ENCODE measurements at regions of chr7 and their contacts with region 1.

Region 1: GRCh38 chr7:44490351-44491200 is at the start of gene NUDCD3:
- DNase-seq: peak; percentile 85 to 94
- H3K4me3 ChIP-seq: peak within 1 kb of the TSS; percentile 70 to 91 (median 79)
- H3K27ac ChIP-seq: peak within 1 kb of the TSS; percentile 95 to 99 (median 97)
- H3K4me1 ChIP-seq: peaks cover 36 to 51% (median 42%) of the 10 kb centered on the region in 4 donors
- H3K27me3 ChIP-seq: no peaks in the 10 kb centered on the region
- CTCF ChIP-seq: no peak
- EP300 ChIP-seq: no peak
- POLR2A ChIP-seq: no peak
- total RNA-seq, gene NUDCD3: 20.4 to 147 (median 52.7) TPM

Region 2: GRCh38 chr7:44565097-44565794 is 74.7 kb after region 1 on chr7:
- intact Hi-C with region 1: loop called (anchors 10 kb)
- DNase-seq: peak; percentile 73 to 88
- H3K4me3 ChIP-seq: no peak overlapping the region
- H3K27ac ChIP-seq: peak overlapping the region in 2 of 5 donors; percentile 7 to 28
- H3K4me1 ChIP-seq: peaks cover 0 to 18% (median 4%) of the 10 kb centered on the region in 4 donors
- H3K27me3 ChIP-seq: no peaks in the 10 kb centered on the region
- CTCF ChIP-seq: peak in 5 of 7 experiments; percentile 89 to 98 (median 97)
- EP300 ChIP-seq: no peak
- POLR2A ChIP-seq: no peak

Measured in stomach (tissue), 19 donors.